H1 (cell line): ENCODE measurements at regions of chr1 and their contacts with region 1.

Region 1: GRCh38 chr1:224149713-224150112 is 33.3 kb upstream of the DEGS1 start:
- DNase-seq: no peak
- H3K4me3 ChIP-seq: no peak overlapping the region
- H3K27ac ChIP-seq: no peak overlapping the region
- H3K4me1 ChIP-seq: no peaks in the 10 kb centered on the region
- H3K27me3 ChIP-seq: no peaks in the 10 kb centered on the region
- CTCF ChIP-seq: no peak
- EP300 ChIP-seq: no peak
- POLR2A ChIP-seq: no peak
- RAD21 ChIP-seq: no peak

Region 2: DNA sequence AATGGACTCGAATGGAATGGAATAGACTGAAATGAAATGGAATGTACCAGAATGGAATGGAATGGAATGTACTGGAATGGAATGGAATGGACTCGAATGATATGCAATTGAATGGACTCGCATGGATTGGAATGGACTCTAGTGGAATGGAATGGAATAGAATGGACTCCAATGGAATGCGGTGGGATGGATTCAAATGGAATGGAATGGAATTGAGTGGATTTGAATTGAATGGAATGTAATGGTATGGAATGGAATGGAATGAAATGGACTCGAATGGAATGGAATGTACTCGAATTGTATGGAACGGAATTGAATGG is 135.4 kb before region 1 on chr1:
- CTCF ChIA-PET with region 1: no interaction called
- POLR2A ChIA-PET with region 1: no interaction called
- DNase-seq: no peak
- H3K4me3 ChIP-seq: no peak overlapping the region
- H3K27ac ChIP-seq: no peak overlapping the region
- H3K4me1 ChIP-seq: no peaks in the 10 kb centered on the region
- H3K27me3 ChIP-seq: no peaks in the 10 kb centered on the region
- CTCF ChIP-seq: no peak
- EP300 ChIP-seq: no peak
- POLR2A ChIP-seq: no peak
- RAD21 ChIP-seq: no peak

Region 3: DNA sequence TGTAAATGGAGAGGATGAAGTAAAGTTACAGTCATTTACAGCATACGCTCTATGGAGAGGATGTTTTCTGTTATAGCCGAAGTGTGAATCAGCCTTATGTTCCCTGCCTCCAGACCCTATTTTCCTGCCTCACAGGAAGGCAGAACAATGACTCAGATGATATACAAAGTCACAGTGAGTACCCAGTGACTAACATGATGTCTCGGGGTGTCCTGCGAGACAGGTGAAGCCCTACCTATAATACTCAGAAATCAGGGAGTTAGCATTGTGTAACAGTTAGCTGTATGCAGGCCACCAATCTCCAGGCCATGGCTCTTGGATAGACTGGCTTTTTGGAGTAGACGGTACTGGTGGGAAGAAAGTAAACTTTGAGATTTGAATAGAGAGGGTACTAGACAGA is 91.4 kb before region 1 on chr1:
- CTCF ChIA-PET with region 1: interaction called, 11 read pairs
- POLR2A ChIA-PET with region 1: no interaction called
- DNase-seq: no peak
- H3K4me3 ChIP-seq: no peak overlapping the region
- H3K27ac ChIP-seq: no peak overlapping the region
- H3K4me1 ChIP-seq: no peaks in the 10 kb centered on the region
- H3K27me3 ChIP-seq: no peaks in the 10 kb centered on the region
- CTCF ChIP-seq: no peak
- EP300 ChIP-seq: no peak
- POLR2A ChIP-seq: no peak
- RAD21 ChIP-seq: no peak

Region 4: GRCh38 chr1:224138198-224138597 is 11.5 kb before region 1 on chr1:
- CTCF ChIA-PET with region 1: interaction called, 16 read pairs
- POLR2A ChIA-PET with region 1: interaction called, 4 read pairs
- DNase-seq: no peak
- H3K4me3 ChIP-seq: no peak overlapping the region
- H3K27ac ChIP-seq: no peak overlapping the region
- H3K4me1 ChIP-seq: no peaks in the 10 kb centered on the region
- H3K27me3 ChIP-seq: no peaks in the 10 kb centered on the region
- CTCF ChIP-seq: no peak
- EP300 ChIP-seq: no peak
- POLR2A ChIP-seq: no peak
- RAD21 ChIP-seq: no peak

Region 5: GRCh38 chr1:224162768-224163167 is 13.1 kb after region 1 on chr1:
- CTCF ChIA-PET with region 1: interaction called, 35 read pairs
- POLR2A ChIA-PET with region 1: interaction called, 6 read pairs
- DNase-seq: no peak
- H3K4me3 ChIP-seq: no peak overlapping the region
- H3K27ac ChIP-seq: no peak overlapping the region
- H3K4me1 ChIP-seq: peaks cover 0 to 10% (median 5%) of the 10 kb centered on the region in 4 experiments; a peak in 4 of 7 replicates
- H3K27me3 ChIP-seq: no peaks in the 10 kb centered on the region
- CTCF ChIP-seq: peak in 1 of 3 experiments; percentile 8; a peak in 1 of 4 replicates
- EP300 ChIP-seq: no peak
- POLR2A ChIP-seq: no peak
- RAD21 ChIP-seq: no peak

Region 6: GRCh38 chr1:224168859-224169380 is 19.2 kb after region 1 on chr1:
- CTCF ChIA-PET with region 1: interaction called, 35 read pairs
- POLR2A ChIA-PET with region 1: interaction called, 6 read pairs
- DNase-seq: no peak
- H3K4me3 ChIP-seq: no peak overlapping the region
- H3K27ac ChIP-seq: no peak overlapping the region
- H3K4me1 ChIP-seq: peaks cover 0 to 11% (median 8%) of the 10 kb centered on the region in 4 experiments; a peak in 3 of 7 replicates
- H3K27me3 ChIP-seq: no peaks in the 10 kb centered on the region
- CTCF ChIP-seq: no peak
- EP300 ChIP-seq: no peak
- POLR2A ChIP-seq: no peak
- RAD21 ChIP-seq: no peak

Region 7: GRCh38 chr1:224223819-224224714 is 74.4 kb after region 1 on chr1:
- CTCF ChIA-PET with region 1: no interaction called
- POLR2A ChIA-PET with region 1: no interaction called
- DNase-seq: no peak
- H3K4me3 ChIP-seq: no peak overlapping the region
- H3K27ac ChIP-seq: no peak overlapping the region
- H3K4me1 ChIP-seq: peaks cover 0 to 4% (median 2%) of the 10 kb centered on the region in 4 experiments; a peak in 2 of 7 replicates
- H3K27me3 ChIP-seq: no peaks in the 10 kb centered on the region; a peak in 1 of 7 replicates
- CTCF ChIP-seq: no peak
- EP300 ChIP-seq: no peak
- POLR2A ChIP-seq: no peak
- RAD21 ChIP-seq: no peak

Region 8: DNA sequence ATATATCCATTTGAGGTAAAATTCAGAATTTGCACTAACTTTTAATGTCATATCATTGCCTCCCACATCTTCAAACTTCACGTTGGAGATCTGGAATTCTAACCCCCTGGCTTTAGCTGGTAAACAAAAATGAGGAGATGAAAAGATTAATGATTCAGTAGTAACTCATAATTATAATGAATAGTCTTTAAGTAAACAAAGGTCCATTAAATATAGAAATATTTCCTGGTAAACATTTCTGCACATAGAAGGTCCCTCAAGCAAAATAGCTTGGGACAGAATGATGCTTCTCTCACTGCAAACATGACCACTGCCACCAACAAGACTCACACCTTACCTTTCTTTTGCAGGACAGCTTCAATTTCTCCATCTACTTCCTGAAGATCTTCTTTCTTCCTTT is 155.0 kb after region 1 on chr1:
- CTCF ChIA-PET with region 1: interaction called, 10 read pairs
- POLR2A ChIA-PET with region 1: no interaction called
- DNase-seq: no peak
- H3K4me3 ChIP-seq: no peak overlapping the region
- H3K27ac ChIP-seq: no peak overlapping the region
- H3K4me1 ChIP-seq: no peaks in the 10 kb centered on the region
- H3K27me3 ChIP-seq: no peaks in the 10 kb centered on the region
- CTCF ChIP-seq: no peak
- EP300 ChIP-seq: no peak
- POLR2A ChIP-seq: no peak
- RAD21 ChIP-seq: no peak

Region 9: DNA sequence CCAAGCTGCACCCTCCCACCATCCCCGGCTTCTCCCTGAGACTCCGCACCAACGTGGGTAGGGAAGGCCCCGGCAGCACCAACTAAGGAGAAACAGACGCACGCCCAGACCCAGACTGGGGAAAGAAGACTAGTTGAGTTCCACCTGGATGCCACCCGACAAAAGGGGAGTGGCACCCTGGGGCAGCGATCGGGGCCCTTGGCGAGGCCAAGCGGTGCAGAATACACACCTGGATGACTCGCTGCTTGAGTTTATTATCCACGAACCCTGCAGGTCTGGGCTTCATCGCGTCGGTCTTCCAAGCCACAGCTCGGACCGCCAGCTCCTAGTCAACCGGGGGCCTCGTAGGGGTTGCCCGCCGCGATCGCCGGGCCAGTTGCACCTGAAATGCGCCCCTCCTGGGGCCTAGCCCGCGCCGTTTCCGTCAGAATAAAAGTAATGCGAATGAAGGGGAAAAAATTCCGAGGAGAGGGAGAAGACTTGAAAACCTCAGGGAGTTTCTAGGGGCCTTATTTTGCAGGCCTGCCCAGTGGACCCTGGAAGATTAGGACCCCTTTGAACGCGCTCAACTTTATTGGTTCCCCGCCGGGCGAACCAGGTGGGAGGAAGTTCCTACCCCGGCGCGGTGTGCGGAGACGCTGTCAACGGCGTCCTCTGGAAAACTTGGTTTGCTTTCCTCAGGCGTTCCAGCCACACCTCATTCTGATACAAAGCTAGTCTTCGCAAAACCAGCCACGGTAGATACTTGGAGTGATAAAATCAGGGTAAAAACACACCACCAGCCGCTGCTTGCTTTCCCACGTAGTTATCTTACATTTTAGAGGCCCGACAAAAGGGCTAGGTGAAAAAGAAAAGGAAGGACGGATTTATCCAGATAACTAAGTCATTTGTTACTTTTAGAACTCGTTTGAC is 180.4 kb after region 1 on chr1 and contains the start of gene NVL:
- CTCF ChIA-PET with region 1: interaction called, 13 read pairs
- POLR2A ChIA-PET with region 1: no interaction called
- DNase-seq: peak; percentile 60 to 88
- H3K4me3 ChIP-seq: peak within 1 kb of the TSS; percentile 89 to 100 (median 98)
- H3K27ac ChIP-seq: peak within 1 kb of the TSS; percentile 95
- H3K4me1 ChIP-seq: no peaks in the 10 kb centered on the region; a peak in 3 of 7 replicates
- H3K27me3 ChIP-seq: no peaks in the 10 kb centered on the region
- CTCF ChIP-seq: no peak
- EP300 ChIP-seq: peak in 1 of 2 experiments; percentile 39; a peak in 1 of 3 replicates
- POLR2A ChIP-seq: peak in 1 of 2 experiments; percentile 50; a peak in 2 of 3 replicates
- RAD21 ChIP-seq: no peak; a peak in 1 of 4 replicates
- total RNA-seq, gene NVL: 42.4 and 45.8 TPM in 2 replicates

Region 10: DNA sequence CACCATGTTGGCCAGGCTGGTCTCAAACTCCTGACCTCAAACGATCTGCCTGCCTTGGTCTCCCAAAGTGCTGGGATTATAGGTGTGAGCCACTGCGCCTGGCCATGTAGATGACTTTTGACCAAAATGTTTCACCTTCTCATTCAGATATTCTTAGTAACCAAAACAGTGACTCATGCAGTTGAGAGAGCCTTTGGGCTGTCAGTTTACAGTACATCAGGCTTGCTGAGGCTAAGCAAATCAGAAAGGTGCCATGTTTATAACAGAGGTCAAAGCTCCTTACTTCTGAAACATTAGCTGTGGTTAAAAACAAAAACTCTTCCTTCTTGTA is 227.9 kb after region 1 on chr1:
- CTCF ChIA-PET with region 1: no interaction called
- POLR2A ChIA-PET with region 1: no interaction called
- DNase-seq: no peak
- H3K4me3 ChIP-seq: no peak overlapping the region
- H3K27ac ChIP-seq: no peak overlapping the region
- H3K4me1 ChIP-seq: no peaks in the 10 kb centered on the region
- H3K27me3 ChIP-seq: no peaks in the 10 kb centered on the region
- CTCF ChIP-seq: no peak
- EP300 ChIP-seq: no peak
- POLR2A ChIP-seq: no peak
- RAD21 ChIP-seq: no peak

Region 11: GRCh38 chr1:224488806-224489499 is 339.2 kb after region 1 on chr1:
- CTCF ChIA-PET with region 1: no interaction called
- POLR2A ChIA-PET with region 1: no interaction called
- DNase-seq: no peak
- H3K4me3 ChIP-seq: no peak overlapping the region
- H3K27ac ChIP-seq: no peak overlapping the region
- H3K4me1 ChIP-seq: peaks cover 3 to 15% (median 7%) of the 10 kb centered on the region in 4 experiments; a peak in 5 of 7 replicates
- H3K27me3 ChIP-seq: no peaks in the 10 kb centered on the region
- CTCF ChIP-seq: no peak
- EP300 ChIP-seq: no peak
- POLR2A ChIP-seq: no peak
- RAD21 ChIP-seq: no peak